Heart left ventricle (tissue), 16 donors: ENCODE measurements at regions of chr2 and their contacts with region 1.

Region 1: GRCh38 chr2:26244309-26245121 is at the starts of genes HADHA and HADHB:
- DNase-seq: peak; percentile 89 to 95 (median 93)
- ATAC-seq: peak; percentile 91 to 97 (median 92)
- H3K4me3 ChIP-seq: peak within 1 kb of the TSS; percentile 59 to 97 (median 86)
- H3K27ac ChIP-seq: peak within 1 kb of the TSS; percentile 94 to 99 (median 98)
- H3K4me1 ChIP-seq: peaks cover 0 to 69% (median 53%) of the 10 kb centered on the region in 12 donors
- H3K27me3 ChIP-seq: no peaks in the 10 kb centered on the region
- CTCF ChIP-seq: peak in 8 of 12 donors; percentile 17 to 53 (median 26)
- POLR2A ChIP-seq: peak in 1 of 2 donors; percentile 78
- total RNA-seq, gene HADHA: 285 to 786 (median 407) TPM
- total RNA-seq, gene HADHB: 684 to 1,915 (median 836) TPM

Region 2: GRCh38 chr2:26274058-26274613 is 29.6 kb after region 1 on chr2:
- intact Hi-C with region 1: loop called in 7 of 10 experiments (anchors 1 to 5 kb)
- DNase-seq: peak in 4 of 5 donors; percentile 29 to 57 (median 38)
- ATAC-seq: peak; percentile 91 to 94 (median 92)
- H3K4me3 ChIP-seq: no peak overlapping the region
- H3K27ac ChIP-seq: peak overlapping the region; percentile 55 to 90 (median 77)
- H3K4me1 ChIP-seq: peaks cover 0 to 59% (median 26%) of the 10 kb centered on the region in 12 donors
- H3K27me3 ChIP-seq: no peaks in the 10 kb centered on the region
- CTCF ChIP-seq: no peak
- POLR2A ChIP-seq: no peak

Region 3: GRCh38 chr2:26279886-26280285 is 35.4 kb after region 1 on chr2:
- intact Hi-C with region 1: loop called in 4 of 10 experiments (anchors 2 to 5 kb)
- DNase-seq: no peak
- ATAC-seq: no peak
- H3K4me3 ChIP-seq: no peak overlapping the region
- H3K27ac ChIP-seq: peak overlapping the region in 1 of 12 donors; percentile 9
- H3K4me1 ChIP-seq: peaks cover 0 to 16% (median 7%) of the 10 kb centered on the region in 12 donors
- H3K27me3 ChIP-seq: no peaks in the 10 kb centered on the region
- CTCF ChIP-seq: no peak
- POLR2A ChIP-seq: no peak

Region 4: DNA sequence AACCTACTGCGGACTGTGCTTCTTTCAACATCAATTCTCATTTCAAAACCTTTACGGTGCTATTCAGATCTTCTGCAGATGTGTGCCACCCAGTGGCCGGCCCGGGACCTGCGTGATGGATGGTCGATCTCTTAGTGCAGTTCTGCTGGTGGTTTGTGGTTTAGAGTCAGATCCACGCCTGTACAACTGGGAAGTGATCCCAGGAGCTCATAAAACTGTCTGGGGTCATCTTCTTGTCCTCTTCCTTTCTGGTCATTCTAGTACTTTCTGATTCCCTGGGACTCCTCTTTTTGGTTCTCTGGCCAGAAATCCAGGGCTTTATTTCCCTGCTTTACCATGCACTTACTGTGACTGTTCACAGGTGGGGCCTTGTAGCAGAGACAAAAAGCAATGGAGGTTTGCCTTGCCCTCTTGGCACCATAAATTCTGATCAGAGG is 85.6 kb after region 1 on chr2:
- intact Hi-C with region 1: loop called in 6 of 10 experiments (anchors 5 to 10 kb)
- DNase-seq: peak; percentile 76 to 91 (median 85)
- ATAC-seq: peak; percentile 73 to 93 (median 91)
- H3K4me3 ChIP-seq: no peak overlapping the region
- H3K27ac ChIP-seq: no peak overlapping the region
- H3K4me1 ChIP-seq: peaks cover 0 to 10% (median 0%) of the 10 kb centered on the region in 12 donors
- H3K27me3 ChIP-seq: no peaks in the 10 kb centered on the region
- CTCF ChIP-seq: peak; percentile 77 to 92 (median 86)
- POLR2A ChIP-seq: no peak

Region 5: GRCh38 chr2:26344581-26345282 is 100.2 kb after region 1 on chr2:
- intact Hi-C with region 1: loop called in 1 of 10 experiments (anchors 5 kb)
- DNase-seq: peak in 1 of 5 donors; percentile 8
- ATAC-seq: no peak
- H3K4me3 ChIP-seq: peak overlapping the region; percentile 54 to 98 (median 82)
- H3K27ac ChIP-seq: peak overlapping the region in 10 of 12 donors; percentile 71 to 98 (median 89)
- H3K4me1 ChIP-seq: peaks cover 0 to 35% (median 21%) of the 10 kb centered on the region in 12 donors
- H3K27me3 ChIP-seq: no peaks in the 10 kb centered on the region
- CTCF ChIP-seq: no peak
- POLR2A ChIP-seq: no peak